ENCODE measurements at regions of chr3 and their contacts with region 1.

Region 1: GRCh38 chr3:12384451-12385233 is 95.8 kb downstream of the PPARG start:
- DNase-seq: no peak
- H3K4me3 ChIP-seq: no peak overlapping the region
- H3K27ac ChIP-seq: no peak overlapping the region
- H3K4me1 ChIP-seq: no peaks in the 10 kb centered on the region
- H3K27me3 ChIP-seq: no peaks in the 10 kb centered on the region
- CTCF ChIP-seq: no peak

Region 2: GRCh38 chr3:12423918-12424630 is 39.4 kb after region 1 on chr3:
- CTCF ChIA-PET with region 1: no interaction called
- dilution Hi-C with region 1: no loop called
- in situ Hi-C with region 1: no loop called
- intact Hi-C with region 1: no loop called
- DNase-seq: no peak
- H3K4me3 ChIP-seq: no peak overlapping the region
- H3K27ac ChIP-seq: no peak overlapping the region
- H3K4me1 ChIP-seq: no peaks in the 10 kb centered on the region
- H3K27me3 ChIP-seq: no peaks in the 10 kb centered on the region
- CTCF ChIP-seq: no peak

Region 3: DNA sequence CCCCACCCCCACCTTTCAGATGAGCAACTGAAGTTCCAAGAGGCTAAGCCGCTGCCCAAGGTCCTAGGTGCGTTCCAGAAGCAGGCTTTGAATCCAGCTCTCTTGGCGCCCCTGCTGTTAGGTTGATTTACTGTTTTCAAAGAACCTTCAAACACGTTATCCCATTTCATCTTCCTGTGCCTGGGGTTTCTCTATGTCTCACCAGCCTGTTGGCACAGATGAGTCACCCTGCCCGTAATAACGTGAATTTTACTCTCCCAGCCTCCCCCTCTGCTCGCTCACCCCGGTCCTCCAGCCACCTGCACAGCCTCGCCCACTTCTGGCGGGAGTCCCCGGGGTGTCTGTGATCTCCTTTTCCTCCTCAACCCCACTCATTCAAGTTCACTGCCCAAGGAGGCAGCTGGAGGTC is 86.6 kb after region 1 on chr3:
- CTCF ChIA-PET with region 1: interaction called, 3 read pairs
- dilution Hi-C with region 1: loop called (anchors 5 kb)
- in situ Hi-C with region 1: no loop called
- intact Hi-C with region 1: no loop called
- DNase-seq: peak; percentile 71
- H3K4me3 ChIP-seq: no peak overlapping the region
- H3K27ac ChIP-seq: no peak overlapping the region
- H3K4me1 ChIP-seq: no peaks in the 10 kb centered on the region
- H3K27me3 ChIP-seq: no peaks in the 10 kb centered on the region
- CTCF ChIP-seq: no peak

Measured in mammary epithelial cell (primary cell).